Lower leg skin (tissue), 4 donors: ENCODE measurements at regions of chr4 and their contacts with region 1.

Region 1: GRCh38 chr4:6470502-6471306 is 1.7 kb downstream of the PPP2R2C start:
- DNase-seq: peak; percentile 15 to 82
- H3K4me3 ChIP-seq: peak overlapping the region; percentile 18
- CTCF ChIP-seq: no peak
- POLR2A ChIP-seq: no peak

Region 2: GRCh38 chr4:6447672-6448171 is 23.0 kb before region 1 on chr4:
- intact Hi-C with region 1: loop called (anchors 1 kb)
- DNase-seq: no peak
- H3K4me3 ChIP-seq: no peak overlapping the region
- CTCF ChIP-seq: no peak
- POLR2A ChIP-seq: no peak

Region 3: DNA sequence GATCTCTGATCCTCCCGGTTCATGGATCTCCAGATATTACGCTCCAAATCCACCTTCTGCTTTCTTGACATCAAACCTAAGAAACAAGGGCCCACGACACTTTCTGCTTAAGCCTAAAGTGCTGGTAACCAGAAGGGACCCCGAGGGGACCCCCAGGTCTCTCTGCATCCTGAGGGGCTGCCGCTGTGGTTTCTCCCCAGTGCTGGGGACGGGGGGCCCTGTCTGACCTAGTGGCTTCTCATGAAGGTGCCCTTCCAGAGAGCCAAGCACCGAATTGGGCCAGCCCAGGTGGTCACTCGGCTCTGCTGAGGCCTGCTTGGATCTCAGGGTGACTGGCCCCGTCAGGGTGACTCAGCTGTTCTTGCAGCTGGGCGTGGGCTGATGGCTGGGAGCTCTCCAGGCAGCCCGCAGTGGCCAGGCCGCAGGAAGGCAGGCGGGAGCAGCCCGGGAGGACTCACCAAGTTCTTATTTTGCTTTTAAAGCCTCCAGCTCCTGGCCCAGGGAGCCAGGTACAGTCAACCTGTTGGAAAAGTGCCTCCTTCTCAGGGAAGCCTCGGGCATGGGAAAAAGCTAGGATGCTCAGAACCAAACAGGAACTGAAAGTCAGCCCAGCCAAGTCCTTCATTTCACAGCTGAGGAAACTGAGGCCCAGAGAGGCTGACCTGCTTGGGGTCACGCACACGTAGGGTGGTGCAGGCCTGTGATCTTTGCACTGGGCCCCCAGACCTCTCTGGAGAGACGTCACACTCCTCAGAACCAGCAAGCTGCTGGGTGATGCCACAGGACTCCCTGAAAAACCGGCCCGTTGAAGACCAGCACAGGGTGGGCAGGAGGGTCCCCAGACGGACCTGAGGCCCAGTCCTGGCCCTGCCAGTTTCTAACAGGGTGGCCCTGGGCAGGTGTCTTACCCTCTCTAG is 262.0 kb after region 1 on chr4:
- intact Hi-C with region 1: no loop called
- DNase-seq: peak in 1 of 2 donors; percentile 90
- H3K4me3 ChIP-seq: no peak overlapping the region
- CTCF ChIP-seq: no peak
- POLR2A ChIP-seq: no peak